Activated CD4-positive, alpha-beta memory T cell treated with anti-CD3 and anti-CD28 coated beads for 36 hours (primary cell): ENCODE measurements at regions of chr12 and their contacts with region 1.

Region 1: DNA sequence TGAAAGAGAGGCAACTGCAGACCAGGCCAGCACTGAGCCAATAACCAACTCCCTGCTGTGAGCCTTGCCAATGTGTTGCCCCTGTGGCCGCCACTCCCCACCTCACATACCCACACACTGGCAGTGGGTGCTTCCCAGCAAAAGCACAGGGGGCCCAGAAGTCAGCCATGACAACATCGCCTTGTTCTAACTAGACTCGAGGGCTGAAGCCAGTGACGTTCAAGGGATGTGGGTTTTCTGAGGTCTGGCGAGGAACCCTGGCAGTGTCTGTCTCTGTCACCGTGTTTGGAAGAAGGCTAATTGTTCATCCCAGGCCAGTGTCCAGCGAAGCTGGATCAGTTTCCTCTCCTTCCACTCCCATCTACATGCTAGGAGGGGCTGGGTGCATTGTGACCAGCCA is 311.8 kb upstream of the AMIGO2 start:
- DNase-seq: peak; percentile 86
- H3K4me3 Mint-ChIP-seq: peak overlapping the region; percentile 71
- H3K27ac Mint-ChIP-seq: peak overlapping the region; percentile 100
- H3K4me1 Mint-ChIP-seq: peaks cover 85% of the 10 kb centered on the region
- H3K27me3 Mint-ChIP-seq: no peaks in the 10 kb centered on the region

Region 2: GRCh38 chr12:47307680-47308399 is 83.7 kb before region 1 on chr12:
- CTCF ChIA-PET with region 1: interaction called, 30 read pairs
- POLR2A ChIA-PET with region 1: interaction called, 12 read pairs
- intact Hi-C with region 1: no loop called
- DNase-seq: peak; percentile 68
- H3K4me3 Mint-ChIP-seq: peak overlapping the region; percentile 82
- H3K27ac Mint-ChIP-seq: peak overlapping the region; percentile 90
- H3K4me1 Mint-ChIP-seq: peaks cover 75% of the 10 kb centered on the region
- H3K27me3 Mint-ChIP-seq: no peaks in the 10 kb centered on the region

Region 3: GRCh38 chr12:47356129-47356700 is 35.4 kb before region 1 on chr12:
- CTCF ChIA-PET with region 1: interaction called, 56 read pairs
- POLR2A ChIA-PET with region 1: interaction called, 36 read pairs
- intact Hi-C with region 1: loop called (anchors 1 kb)
- DNase-seq: peak; percentile 50
- H3K4me3 Mint-ChIP-seq: peak overlapping the region; percentile 66
- H3K27ac Mint-ChIP-seq: peak overlapping the region; percentile 99
- H3K4me1 Mint-ChIP-seq: peaks cover 76% of the 10 kb centered on the region
- H3K27me3 Mint-ChIP-seq: no peaks in the 10 kb centered on the region

Region 4: GRCh38 chr12:47377414-47378221 is 13.9 kb before region 1 on chr12:
- CTCF ChIA-PET with region 1: interaction called, 3 read pairs
- POLR2A ChIA-PET with region 1: no interaction called
- intact Hi-C with region 1: loop called (anchors 1 kb)
- DNase-seq: no peak
- H3K4me3 Mint-ChIP-seq: no peak overlapping the region
- H3K27ac Mint-ChIP-seq: peak overlapping the region; percentile 85
- H3K4me1 Mint-ChIP-seq: peaks cover 55% of the 10 kb centered on the region
- H3K27me3 Mint-ChIP-seq: no peaks in the 10 kb centered on the region